A673 (cell line): ENCODE measurements at regions of chr2 and their contacts with region 1.

Region 1: DNA sequence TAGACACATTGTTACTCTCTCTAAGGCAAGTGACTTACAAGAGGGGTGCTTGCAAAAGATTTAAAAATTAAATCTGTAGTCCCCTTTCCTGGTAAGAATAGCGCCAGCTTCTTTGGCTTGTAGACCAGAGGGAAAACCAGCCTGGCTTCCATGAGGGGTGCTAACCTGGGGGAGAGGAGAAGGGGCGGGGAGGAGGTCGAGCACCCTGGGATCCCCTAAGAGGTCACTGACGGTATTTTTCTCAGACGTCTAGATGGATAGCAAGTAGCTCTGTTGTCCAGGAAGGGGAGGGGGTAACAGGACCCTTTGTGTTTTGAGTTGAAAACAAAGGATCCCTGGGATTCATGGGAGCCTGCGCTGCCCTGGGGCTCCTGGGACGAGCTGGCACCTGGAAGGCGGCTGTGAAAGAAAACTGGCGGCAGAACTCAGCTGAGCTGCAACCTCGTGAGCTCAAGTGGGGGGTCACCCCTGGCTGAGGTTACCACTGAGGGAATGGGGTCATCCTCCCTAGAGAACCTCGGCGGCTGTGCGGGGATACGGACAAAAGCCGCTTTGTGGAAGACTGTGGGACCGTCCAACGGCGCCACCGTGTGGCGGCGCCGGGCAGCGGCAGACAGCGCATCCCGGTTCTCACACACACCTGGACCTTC is 37.8 kb upstream of the MRPL19 start:
- DNase-seq: peak; percentile 65
- H3K4me3 ChIP-seq: peak overlapping the region; percentile 30
- H3K27ac ChIP-seq: no peak overlapping the region
- H3K4me1 ChIP-seq: peaks cover 16% of the 10 kb centered on the region
- H3K27me3 ChIP-seq: no peaks in the 10 kb centered on the region
- CTCF ChIP-seq: peak; percentile 97

Region 2: DNA sequence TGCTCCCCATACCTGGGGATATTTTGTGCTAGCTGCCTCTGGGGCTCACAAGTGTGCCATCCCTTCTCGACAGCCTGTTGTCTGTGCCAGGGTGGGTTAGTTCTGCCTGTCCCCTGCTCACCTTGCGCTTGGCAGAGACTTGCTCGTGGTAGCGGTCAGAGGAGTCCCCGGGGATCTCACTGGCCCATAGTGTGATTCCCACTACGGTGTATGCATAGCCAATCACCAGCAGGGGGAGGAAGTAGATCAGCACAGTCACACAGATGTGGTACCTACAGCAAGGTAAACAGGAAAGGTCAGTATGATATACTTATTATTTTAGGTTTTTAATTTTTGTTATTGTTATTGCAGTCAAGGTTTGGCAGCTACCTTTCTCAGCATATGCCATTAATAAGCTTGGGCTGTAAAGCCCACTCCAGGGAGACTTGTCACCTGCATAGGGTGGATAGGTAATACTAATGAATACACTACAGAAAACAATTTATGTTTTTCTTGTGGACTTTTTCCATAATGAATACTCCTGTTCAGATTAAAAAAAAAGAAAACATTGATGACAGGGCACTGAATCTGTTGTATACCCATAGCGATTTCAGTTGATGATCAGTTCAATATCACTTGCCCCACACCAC is 555.2 kb before region 1 on chr2:
- CTCF ChIA-PET with region 1: no interaction called
- POLR2A ChIA-PET with region 1: no interaction called
- intact Hi-C with region 1: loop called (anchors 10 kb)
- DNase-seq: peak; percentile 20
- H3K4me3 ChIP-seq: no peak overlapping the region
- H3K27ac ChIP-seq: no peak overlapping the region
- H3K4me1 ChIP-seq: no peaks in the 10 kb centered on the region
- H3K27me3 ChIP-seq: no peaks in the 10 kb centered on the region
- CTCF ChIP-seq: peak; percentile 66

Region 3: GRCh38 chr2:75390169-75390568 is 218.6 kb before region 1 on chr2:
- CTCF ChIA-PET with region 1: no interaction called
- POLR2A ChIA-PET with region 1: no interaction called
- intact Hi-C with region 1: no loop called
- DNase-seq: no peak
- H3K4me3 ChIP-seq: no peak overlapping the region
- H3K27ac ChIP-seq: no peak overlapping the region
- H3K4me1 ChIP-seq: no peaks in the 10 kb centered on the region
- H3K27me3 ChIP-seq: no peaks in the 10 kb centered on the region
- CTCF ChIP-seq: no peak

Region 4: DNA sequence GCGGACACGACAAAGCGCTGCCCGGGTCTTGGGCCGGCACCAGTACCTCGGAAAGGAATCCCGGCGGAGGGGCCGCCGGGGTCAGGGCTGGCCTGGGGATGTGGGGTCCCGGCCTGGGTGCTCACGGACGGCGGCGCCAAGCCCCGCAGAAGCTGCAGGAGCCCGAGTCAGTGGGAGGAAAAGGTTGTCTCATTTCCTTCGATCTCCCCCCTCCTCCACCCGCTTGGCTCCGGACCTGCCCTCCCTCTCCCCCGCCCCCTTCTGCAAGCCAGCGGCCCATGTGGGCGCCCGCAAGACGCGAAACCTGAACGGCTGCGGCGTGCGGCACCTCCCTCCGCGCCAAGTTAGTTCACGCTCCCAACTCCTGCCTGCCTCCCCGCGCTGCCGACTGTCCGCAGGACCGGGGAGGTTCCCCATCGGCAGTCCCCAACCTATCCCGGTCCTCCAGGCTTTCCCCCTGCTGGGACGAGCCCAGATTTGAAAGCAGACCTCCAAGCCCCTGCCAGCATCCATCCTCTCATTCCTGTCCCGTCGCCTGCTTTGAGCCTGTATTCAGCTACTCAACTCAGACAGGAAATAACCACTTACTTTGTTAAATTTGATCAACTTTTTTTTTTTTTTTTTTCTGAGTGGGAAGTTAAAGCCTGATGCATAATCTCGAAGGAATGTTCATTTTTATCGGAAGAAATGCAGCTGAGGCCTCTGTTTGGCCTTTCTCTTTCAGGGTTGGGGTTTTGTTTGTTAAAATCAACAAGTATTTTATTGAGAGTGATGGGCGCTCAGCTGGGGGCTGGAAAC is 47.8 kb before region 1 on chr2 and contains the start of gene EVA1A:
- CTCF ChIA-PET with region 1: interaction called, 9 read pairs
- POLR2A ChIA-PET with region 1: no interaction called
- intact Hi-C with region 1: loop called (anchors 1 kb)
- DNase-seq: peak; percentile 89
- H3K4me3 ChIP-seq: peak within 1 kb of the TSS; percentile 61
- H3K27ac ChIP-seq: no peak within 1 kb of the TSS
- H3K4me1 ChIP-seq: peaks cover 14% of the 10 kb centered on the region
- H3K27me3 ChIP-seq: no peaks in the 10 kb centered on the region
- CTCF ChIP-seq: no peak
- total RNA-seq, gene EVA1A: 4.0 and 4.3 TPM in 2 replicates

Region 5: DNA sequence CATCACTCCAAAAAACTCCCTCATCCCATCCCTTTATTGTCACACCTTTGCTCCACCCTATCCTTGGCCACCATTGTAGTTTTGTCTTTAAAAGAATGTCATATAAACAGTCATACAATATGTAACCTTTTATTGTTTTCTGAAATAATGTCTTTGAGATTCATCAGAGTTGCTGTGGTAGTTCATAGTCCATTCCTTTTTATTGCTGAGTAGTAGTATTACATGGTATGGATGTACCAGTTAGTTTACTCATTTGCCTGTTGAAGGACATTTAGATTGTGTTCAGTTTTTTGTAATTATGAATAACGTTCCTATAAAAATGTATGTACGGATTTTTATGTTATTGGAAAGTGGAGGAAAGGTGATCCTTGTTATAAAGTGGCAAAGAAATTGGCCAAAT is 273.7 kb after region 1 on chr2:
- CTCF ChIA-PET with region 1: no interaction called
- POLR2A ChIA-PET with region 1: no interaction called
- intact Hi-C with region 1: no loop called
- DNase-seq: no peak
- H3K4me3 ChIP-seq: no peak overlapping the region
- H3K27ac ChIP-seq: no peak overlapping the region
- H3K4me1 ChIP-seq: no peaks in the 10 kb centered on the region
- H3K27me3 ChIP-seq: no peaks in the 10 kb centered on the region
- CTCF ChIP-seq: no peak